ENCODE measurements at regions of chr1 and their contacts with region 1.

Region 1: DNA sequence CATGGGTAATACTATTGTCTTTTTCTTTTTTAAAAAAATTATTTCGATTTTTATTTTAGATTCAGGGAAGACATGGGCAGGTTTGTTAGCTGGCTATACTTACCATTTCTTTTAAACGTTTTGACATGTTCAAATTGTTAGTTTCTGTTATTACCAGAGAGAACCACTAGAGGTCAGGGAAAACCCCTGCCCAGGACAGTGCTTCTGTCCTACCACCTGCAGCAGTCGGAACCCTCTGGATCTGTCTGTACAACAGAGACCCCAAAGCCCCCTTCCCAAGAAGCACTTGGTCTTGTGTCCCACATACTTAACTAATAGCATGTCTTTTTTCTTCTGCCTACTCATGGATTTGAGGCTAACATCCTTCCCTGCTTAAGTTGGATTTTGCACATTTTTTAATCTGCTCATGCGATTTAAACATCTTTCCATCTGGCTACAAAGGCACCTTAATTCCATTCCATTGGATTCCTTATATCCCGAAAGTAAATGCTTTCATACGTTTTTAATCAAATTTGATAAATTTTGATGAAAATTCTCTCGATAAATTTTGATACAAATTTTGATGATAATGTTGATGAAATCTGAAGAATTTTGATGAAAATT is 10.0 kb upstream of the C1orf115 start:
- DNase-seq: peak in 2 of 4 donors; percentile 27 to 59
- ATAC-seq: peak; percentile 87
- H3K4me3 ChIP-seq: no peak overlapping the region
- H3K27ac ChIP-seq: no peak overlapping the region
- H3K4me1 ChIP-seq: peaks cover 0 to 11% of the 10 kb centered on the region in 2 donors
- H3K27me3 ChIP-seq: no peaks in the 10 kb centered on the region
- CTCF ChIP-seq: peak; percentile 44 to 76

Region 2: GRCh38 chr1:220764757-220765156 is 84.6 kb after region 1 on chr1:
- intact Hi-C with region 1: no loop called
- DNase-seq: no peak
- ATAC-seq: no peak
- H3K4me3 ChIP-seq: no peak overlapping the region
- H3K27ac ChIP-seq: no peak overlapping the region
- H3K4me1 ChIP-seq: peaks cover 12 to 20% of the 10 kb centered on the region in 2 donors
- H3K27me3 ChIP-seq: no peaks in the 10 kb centered on the region
- CTCF ChIP-seq: no peak

Region 3: GRCh38 chr1:220776720-220777326 is 96.6 kb after region 1 on chr1:
- intact Hi-C with region 1: loop called in 1 of 2 experiments (anchors 10 kb)
- DNase-seq: peak; percentile 70 to 96 (median 84)
- ATAC-seq: peak; percentile 98
- H3K4me3 ChIP-seq: no peak overlapping the region
- H3K27ac ChIP-seq: peak overlapping the region in 1 of 2 donors; percentile 76
- H3K4me1 ChIP-seq: peaks cover 0 to 18% of the 10 kb centered on the region in 2 donors
- H3K27me3 ChIP-seq: no peaks in the 10 kb centered on the region
- CTCF ChIP-seq: peak; percentile 85 to 90